ENCODE measurements at regions of chr3 and their contacts with region 1.

Region 1: GRCh38 chr3:43378066-43378935 is 92.0 kb downstream of the SNRK start:
- DNase-seq: peak; percentile 30 to 78 (median 71)
- ATAC-seq: peak; percentile 94
- H3K4me3 ChIP-seq: no peak overlapping the region
- H3K4me3 Mint-ChIP-seq: no peak overlapping the region
- H3K27ac ChIP-seq: no peak overlapping the region
- H3K27ac Mint-ChIP-seq: peak overlapping the region in 8 of 9 donors; percentile 26 to 88 (median 40)
- H3K4me1 ChIP-seq: peaks cover 6 to 10% of the 10 kb centered on the region in 2 donors
- H3K4me1 Mint-ChIP-seq: peaks cover 6 to 29% (median 19%) of the 10 kb centered on the region in 7 donors
- H3K27me3 ChIP-seq: no peaks in the 10 kb centered on the region
- H3K27me3 Mint-ChIP-seq: peaks cover 0 to 12% (median 0%) of the 10 kb centered on the region in 5 donors

Region 2: GRCh38 chr3:43477600-43477999 is 99.3 kb after region 1 on chr3:
- CTCF ChIA-PET with region 1: interaction called, 3 read pairs
- POLR2A ChIA-PET with region 1: no interaction called
- intact Hi-C with region 1: loop called in 1 of 2 experiments (anchors 2 kb)
- DNase-seq: peak in 8 of 9 donors; percentile 21 to 81 (median 72)
- ATAC-seq: peak; percentile 98
- H3K4me3 ChIP-seq: peak overlapping the region; percentile 7
- H3K4me3 Mint-ChIP-seq: peak overlapping the region; percentile 48 to 78 (median 65)
- H3K27ac ChIP-seq: peak overlapping the region; percentile 71
- H3K27ac Mint-ChIP-seq: peak overlapping the region; percentile 91 to 99 (median 98)
- H3K4me1 ChIP-seq: peaks cover 33 to 40% of the 10 kb centered on the region in 2 donors
- H3K4me1 Mint-ChIP-seq: peaks cover 24 to 66% (median 60%) of the 10 kb centered on the region in 7 donors
- H3K27me3 ChIP-seq: no peaks in the 10 kb centered on the region
- H3K27me3 Mint-ChIP-seq: peaks cover 0 to 2% (median 0%) of the 10 kb centered on the region in 5 donors